Naive thymus-derived CD4-positive, alpha-beta T cell (primary cell): ENCODE measurements at regions of chr22 and their contacts with region 1.

Region 1: GRCh38 chr22:37623075-37624016 is 14.7 kb downstream of the GGA1 start:
- DNase-seq: peak; percentile 63 to 84 (median 75)
- ATAC-seq: peak; percentile 91
- H3K4me3 ChIP-seq: no peak overlapping the region
- H3K4me3 Mint-ChIP-seq: peak overlapping the region in 9 of 10 donors; percentile 49 to 75 (median 60)
- H3K27ac ChIP-seq: peak overlapping the region; percentile 60
- H3K27ac Mint-ChIP-seq: peak overlapping the region; percentile 87 to 99 (median 94)
- H3K4me1 ChIP-seq: peaks cover 45 to 52% of the 10 kb centered on the region in 2 donors
- H3K4me1 Mint-ChIP-seq: peaks cover 28 to 53% (median 37%) of the 10 kb centered on the region in 7 donors
- H3K27me3 ChIP-seq: no peaks in the 10 kb centered on the region
- H3K27me3 Mint-ChIP-seq: no peaks in the 10 kb centered on the region

Region 2: GRCh38 chr22:37633625-37634416 is 10.5 kb after region 1 on chr22:
- CTCF ChIA-PET with region 1: interaction called, 292 read pairs
- POLR2A ChIA-PET with region 1: interaction called, 135 read pairs
- intact Hi-C with region 1: loop called (anchors 1 kb)
- DNase-seq: peak in 5 of 9 donors; percentile 25 to 68 (median 37)
- ATAC-seq: peak; percentile 81
- H3K4me3 ChIP-seq: peak overlapping the region; percentile 53
- H3K4me3 Mint-ChIP-seq: peak overlapping the region; percentile 18 to 80 (median 70)
- H3K27ac ChIP-seq: peak overlapping the region; percentile 71
- H3K27ac Mint-ChIP-seq: peak overlapping the region; percentile 86 to 98 (median 93)
- H3K4me1 ChIP-seq: peaks cover 55 to 72% of the 10 kb centered on the region in 2 donors
- H3K4me1 Mint-ChIP-seq: peaks cover 23 to 70% (median 64%) of the 10 kb centered on the region in 7 donors
- H3K27me3 ChIP-seq: no peaks in the 10 kb centered on the region
- H3K27me3 Mint-ChIP-seq: no peaks in the 10 kb centered on the region

Region 3: GRCh38 chr22:37658133-37659065 is 35.1 kb after region 1 on chr22 and contains the start of gene PDXP:
- CTCF ChIA-PET with region 1: interaction called, 6 read pairs
- POLR2A ChIA-PET with region 1: interaction called, 27 read pairs
- intact Hi-C with region 1: loop called in 1 of 2 experiments (anchors 1 kb)
- DNase-seq: peak; percentile 95 to 99 (median 98)
- ATAC-seq: peak; percentile 96
- H3K4me3 ChIP-seq: peak within 1 kb of the TSS; percentile 60
- H3K4me3 Mint-ChIP-seq: peak within 1 kb of the TSS; percentile 85 to 95 (median 89)
- H3K27ac ChIP-seq: peak within 1 kb of the TSS; percentile 75
- H3K27ac Mint-ChIP-seq: peak within 1 kb of the TSS; percentile 82 to 98 (median 91)
- H3K4me1 ChIP-seq: peaks cover 23 to 26% of the 10 kb centered on the region in 2 donors
- H3K4me1 Mint-ChIP-seq: peaks cover 27 to 45% (median 41%) of the 10 kb centered on the region in 7 donors
- H3K27me3 ChIP-seq: no peaks in the 10 kb centered on the region
- H3K27me3 Mint-ChIP-seq: no peaks in the 10 kb centered on the region
- total RNA-seq, gene PDXP: 3.9 to 27.4 (median 7.5) TPM

Region 4: GRCh38 chr22:37686002-37686982 is 62.9 kb after region 1 on chr22 and contains the start of gene NOL12:
- CTCF ChIA-PET with region 1: interaction called, 11 read pairs
- POLR2A ChIA-PET with region 1: interaction called, 27 read pairs
- intact Hi-C with region 1: loop called (anchors 1 kb)
- DNase-seq: peak; percentile 63 to 82 (median 78)
- ATAC-seq: peak; percentile 91
- H3K4me3 ChIP-seq: peak within 1 kb of the TSS; percentile 82
- H3K4me3 Mint-ChIP-seq: peak within 1 kb of the TSS; percentile 93 to 98 (median 96)
- H3K27ac ChIP-seq: peak within 1 kb of the TSS; percentile 84
- H3K27ac Mint-ChIP-seq: peak within 1 kb of the TSS; percentile 88 to 99 (median 95)
- H3K4me1 ChIP-seq: peaks cover 18 to 22% of the 10 kb centered on the region in 2 donors
- H3K4me1 Mint-ChIP-seq: peaks cover 16 to 39% (median 33%) of the 10 kb centered on the region in 7 donors
- H3K27me3 ChIP-seq: no peaks in the 10 kb centered on the region
- H3K27me3 Mint-ChIP-seq: no peaks in the 10 kb centered on the region
- total RNA-seq, gene NOL12: 32.8 to 52.5 (median 45.3) TPM

Region 5: DNA sequence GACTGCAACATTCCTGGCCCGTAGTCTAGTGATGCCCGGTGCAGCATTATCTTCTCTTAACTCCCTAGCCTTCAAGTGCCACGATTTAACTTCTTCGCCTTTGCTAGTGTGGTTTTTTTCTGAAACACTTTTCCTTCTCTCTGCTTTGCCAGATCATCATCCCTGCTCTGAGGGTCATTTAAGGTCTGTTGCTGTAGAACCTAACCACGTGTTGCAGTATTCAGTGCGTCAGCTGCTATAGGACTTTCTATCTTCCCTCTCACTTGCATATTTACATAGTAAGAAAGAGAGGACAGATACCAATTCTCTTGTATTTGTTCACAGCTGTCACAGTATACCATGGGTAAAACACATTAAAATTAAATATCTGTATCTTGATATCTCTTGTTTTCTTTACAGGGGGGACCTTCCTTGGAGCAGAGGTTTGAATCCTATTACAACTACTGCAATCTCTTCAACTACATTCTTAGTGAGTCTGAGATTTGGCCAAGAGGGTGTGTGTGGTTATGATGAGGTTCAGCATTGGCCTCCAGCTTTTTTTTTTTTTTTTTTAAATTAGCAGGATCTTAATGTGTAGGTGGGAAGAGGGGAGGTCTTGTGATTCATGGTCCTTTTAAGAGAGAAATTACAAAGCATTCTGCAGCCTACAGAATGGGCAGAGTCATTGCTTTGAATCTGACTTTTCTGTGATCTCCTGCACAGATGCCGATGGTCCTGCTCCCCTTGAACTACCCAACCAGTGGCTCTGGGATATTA is 239.4 kb after region 1 on chr22:
- CTCF ChIA-PET with region 1: no interaction called
- POLR2A ChIA-PET with region 1: no interaction called
- intact Hi-C with region 1: loop called in 1 of 2 experiments (anchors 1 kb)
- DNase-seq: no peak
- ATAC-seq: no peak
- H3K4me3 ChIP-seq: no peak overlapping the region
- H3K4me3 Mint-ChIP-seq: no peak overlapping the region
- H3K27ac ChIP-seq: no peak overlapping the region
- H3K27ac Mint-ChIP-seq: peak overlapping the region in 3 of 9 donors; percentile 13 to 82 (median 76)
- H3K4me1 ChIP-seq: peaks cover 0 to 2% of the 10 kb centered on the region in 2 donors
- H3K4me1 Mint-ChIP-seq: peaks cover 5 to 10% (median 6%) of the 10 kb centered on the region in 7 donors
- H3K27me3 ChIP-seq: no peaks in the 10 kb centered on the region
- H3K27me3 Mint-ChIP-seq: no peaks in the 10 kb centered on the region

Region 6: DNA sequence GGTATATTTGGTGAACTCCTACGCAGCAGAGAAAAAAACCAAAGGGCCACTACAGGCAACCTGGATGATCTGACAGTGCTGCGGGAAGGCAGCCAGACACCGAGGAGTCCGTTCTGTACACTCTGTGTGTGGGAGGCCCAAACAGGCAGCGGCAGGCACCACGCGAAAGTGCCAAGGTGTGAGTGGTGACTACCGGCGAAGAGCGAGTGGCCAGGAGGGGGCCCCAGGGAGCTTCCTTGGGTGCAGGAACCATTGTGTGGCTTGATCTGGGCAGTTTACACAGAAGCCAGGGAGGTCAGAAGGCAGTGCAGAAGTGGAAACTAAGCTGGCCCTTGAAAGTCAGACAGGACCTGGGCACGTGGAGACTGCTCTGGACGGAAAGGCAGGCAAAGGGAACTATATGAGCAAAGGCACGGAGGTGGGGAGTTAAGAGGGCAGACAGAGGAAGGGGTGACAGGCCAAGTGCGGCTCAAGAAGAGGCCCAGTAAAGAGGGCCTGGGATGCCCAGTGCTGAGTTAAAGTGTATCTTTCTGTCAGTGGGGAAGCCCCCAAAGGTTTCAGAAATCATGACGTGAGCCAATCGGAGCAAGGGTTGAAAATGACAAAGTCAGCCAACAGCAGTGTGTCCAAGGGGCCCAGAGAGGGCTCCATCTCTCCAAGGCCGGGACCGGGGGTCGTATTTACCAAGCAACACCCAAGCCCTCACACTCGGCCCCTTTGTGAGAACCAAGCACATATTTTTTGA is 638.9 kb after region 1 on chr22:
- CTCF ChIA-PET with region 1: no interaction called
- POLR2A ChIA-PET with region 1: no interaction called
- intact Hi-C with region 1: no loop called
- DNase-seq: peak in 5 of 9 donors; percentile 18 to 39 (median 20)
- ATAC-seq: peak; percentile 47
- H3K4me3 ChIP-seq: no peak overlapping the region
- H3K4me3 Mint-ChIP-seq: peak overlapping the region in 1 of 10 donors; percentile 53
- H3K27ac ChIP-seq: no peak overlapping the region
- H3K27ac Mint-ChIP-seq: peak overlapping the region in 2 of 9 donors; percentile 15 to 63
- H3K4me1 ChIP-seq: peaks cover 10 to 28% of the 10 kb centered on the region in 2 donors
- H3K4me1 Mint-ChIP-seq: peaks cover 27 to 75% (median 65%) of the 10 kb centered on the region in 7 donors
- H3K27me3 ChIP-seq: no peaks in the 10 kb centered on the region
- H3K27me3 Mint-ChIP-seq: no peaks in the 10 kb centered on the region